ENCODE measurements at regions of chr4 and their contacts with region 1.

Region 1: DNA sequence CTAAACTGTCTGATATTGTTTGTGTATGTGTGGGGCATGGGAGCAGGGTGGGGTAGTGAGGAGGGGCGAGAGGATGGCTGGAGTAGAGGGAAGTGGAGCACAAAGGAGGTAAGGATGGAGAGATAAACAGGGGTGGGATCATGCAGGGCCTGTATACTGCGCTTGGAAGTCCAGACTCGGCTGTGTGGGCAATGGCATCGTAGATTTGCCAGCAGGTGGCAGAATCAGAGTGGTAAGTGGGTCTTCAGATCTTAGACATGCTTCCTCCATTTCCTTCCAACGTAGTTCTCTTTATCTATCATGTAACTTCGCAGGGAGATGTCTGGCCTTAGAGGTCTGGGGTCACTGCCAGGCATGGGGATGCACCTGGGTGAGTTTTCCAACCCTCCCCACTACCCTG is 155.5 kb downstream of the PDGFRA start:
- DNase-seq: peak; percentile 34
- H3K4me3 ChIP-seq: no peak overlapping the region
- H3K27ac ChIP-seq: no peak overlapping the region
- H3K4me1 ChIP-seq: no peaks in the 10 kb centered on the region
- H3K27me3 ChIP-seq: no peaks in the 10 kb centered on the region
- CTCF ChIP-seq: peak in 4 of 5 experiments; percentile 18 to 36 (median 32)
- EP300 ChIP-seq: no peak
- POLR2A ChIP-seq: no peak

Region 2: GRCh38 chr4:54433686-54434085 is 49.1 kb after region 1 on chr4:
- in situ Hi-C with region 1: no loop called
- intact Hi-C with region 1: loop called (anchors 1 kb)
- DNase-seq: no peak
- H3K4me3 ChIP-seq: no peak overlapping the region
- H3K27ac ChIP-seq: no peak overlapping the region
- H3K4me1 ChIP-seq: no peaks in the 10 kb centered on the region
- H3K27me3 ChIP-seq: peaks cover 5% of the 10 kb centered on the region
- CTCF ChIP-seq: no peak
- EP300 ChIP-seq: no peak
- POLR2A ChIP-seq: no peak

Region 3: GRCh38 chr4:55154290-55154880 is 769.8 kb after region 1 on chr4:
- in situ Hi-C with region 1: no loop called
- intact Hi-C with region 1: no loop called
- DNase-seq: no peak
- H3K4me3 ChIP-seq: no peak overlapping the region
- H3K27ac ChIP-seq: no peak overlapping the region
- H3K4me1 ChIP-seq: no peaks in the 10 kb centered on the region
- H3K27me3 ChIP-seq: peaks cover 7% of the 10 kb centered on the region
- CTCF ChIP-seq: no peak
- EP300 ChIP-seq: no peak
- POLR2A ChIP-seq: no peak

Measured in transverse colon (tissue), 4 donors.